Psoas muscle (tissue), 8 donors: ENCODE measurements at regions of chr10 and their contacts with region 1.

Region 1: GRCh38 chr10:74988832-74989561 is 122.5 kb upstream of the SAMD8 start:
- DNase-seq: no peak
- ATAC-seq: peak in 2 of 4 donors; percentile 47 to 53
- H3K4me3 ChIP-seq: no peak overlapping the region
- H3K27ac ChIP-seq: peak overlapping the region; percentile 2
- H3K4me1 ChIP-seq: peaks cover 25% of the 10 kb centered on the region
- H3K27me3 ChIP-seq: no peaks in the 10 kb centered on the region
- CTCF ChIP-seq: no peak

Region 2: DNA sequence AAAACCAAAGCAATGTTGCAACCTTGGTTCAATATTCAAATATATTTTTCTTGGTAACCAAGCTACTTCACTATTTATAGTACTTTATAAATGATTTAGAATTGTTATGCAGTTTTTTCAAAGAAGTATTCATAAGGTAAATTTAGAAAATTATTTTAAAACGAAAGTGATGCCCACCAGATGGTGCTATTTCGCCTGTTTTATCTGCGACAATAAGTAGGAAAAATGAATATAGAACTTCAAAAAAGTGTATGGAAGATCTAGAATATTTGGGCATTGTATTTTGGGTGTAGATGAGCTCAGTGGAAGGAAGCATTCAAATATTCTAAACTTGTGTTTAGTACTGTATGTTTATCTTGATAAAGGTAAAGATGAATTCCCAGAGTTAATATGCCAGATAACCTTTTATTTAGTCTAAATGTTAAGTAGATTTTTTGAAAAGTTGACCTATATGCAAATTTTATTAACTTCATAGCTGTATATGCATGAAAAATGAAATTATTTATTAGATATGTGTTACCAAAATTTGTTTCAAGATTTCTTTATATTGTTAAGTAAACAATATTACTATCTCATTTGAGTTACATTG is 744.8 kb before region 1 on chr10:
- intact Hi-C with region 1: no loop called
- DNase-seq: no peak
- ATAC-seq: no peak
- H3K4me3 ChIP-seq: no peak overlapping the region
- H3K27ac ChIP-seq: no peak overlapping the region
- H3K4me1 ChIP-seq: no peaks in the 10 kb centered on the region
- H3K27me3 ChIP-seq: no peaks in the 10 kb centered on the region
- CTCF ChIP-seq: peak; percentile 51

Region 3: DNA sequence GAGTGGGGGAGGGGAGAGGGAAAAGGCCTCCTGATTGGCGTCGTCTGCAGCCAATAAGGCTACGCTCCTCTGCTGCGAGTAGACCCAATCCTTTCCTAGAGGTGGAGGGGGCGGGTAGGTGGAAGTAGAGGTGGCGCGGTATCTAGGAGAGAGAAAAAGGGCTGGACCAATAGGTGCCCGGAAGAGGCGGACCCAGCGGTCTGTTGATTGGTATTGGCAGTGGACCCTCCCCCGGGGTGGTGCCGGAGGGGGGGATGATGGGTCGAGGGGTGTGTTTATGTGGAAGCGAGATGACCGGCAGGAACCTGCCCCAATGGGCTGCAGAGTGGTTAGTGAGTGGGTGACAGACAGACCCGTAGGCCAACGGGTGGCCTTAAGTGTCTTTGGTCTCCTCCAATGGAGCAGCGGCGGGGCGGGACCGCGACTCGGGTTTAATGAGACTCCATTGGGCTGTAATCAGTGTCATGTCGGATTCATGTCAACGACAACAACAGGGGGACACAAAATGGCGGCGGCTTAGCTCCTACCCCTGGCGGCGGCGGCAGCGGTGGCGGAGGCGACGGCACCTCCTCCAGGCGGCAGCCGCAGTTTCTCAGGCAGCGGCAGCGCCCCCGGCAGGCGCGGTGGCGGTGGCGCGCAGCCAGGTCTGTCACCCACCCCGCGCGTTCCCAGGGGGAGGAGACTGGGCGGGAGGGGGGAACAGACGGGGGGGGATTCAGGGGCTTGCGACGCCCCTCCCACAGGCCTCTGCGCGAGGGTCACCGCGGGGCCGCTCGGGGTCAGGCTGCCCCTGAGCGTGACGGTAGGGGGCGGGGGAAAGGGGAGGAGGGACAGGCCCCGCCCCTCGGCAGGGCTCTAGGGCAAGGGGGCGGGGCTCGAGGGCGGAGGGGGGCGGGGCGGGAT is 162.6 kb before region 1 on chr10 and contains the start of gene KAT6B:
- intact Hi-C with region 1: loop called in 1 of 2 experiments (anchors 5 kb)
- DNase-seq: peak; percentile 100
- ATAC-seq: peak; percentile 86 to 91 (median 87)
- H3K4me3 ChIP-seq: peak within 1 kb of the TSS; percentile 95
- H3K27ac ChIP-seq: peak within 1 kb of the TSS; percentile 97
- H3K4me1 ChIP-seq: peaks cover 49% of the 10 kb centered on the region
- H3K27me3 ChIP-seq: no peaks in the 10 kb centered on the region
- CTCF ChIP-seq: peak; percentile 17
- total RNA-seq, gene KAT6B: 16.9 to 21.3 (median 18.8) TPM